Heart right ventricle (tissue), 16 donors: ENCODE measurements at regions of chr3 and their contacts with region 1.

Region 1: DNA sequence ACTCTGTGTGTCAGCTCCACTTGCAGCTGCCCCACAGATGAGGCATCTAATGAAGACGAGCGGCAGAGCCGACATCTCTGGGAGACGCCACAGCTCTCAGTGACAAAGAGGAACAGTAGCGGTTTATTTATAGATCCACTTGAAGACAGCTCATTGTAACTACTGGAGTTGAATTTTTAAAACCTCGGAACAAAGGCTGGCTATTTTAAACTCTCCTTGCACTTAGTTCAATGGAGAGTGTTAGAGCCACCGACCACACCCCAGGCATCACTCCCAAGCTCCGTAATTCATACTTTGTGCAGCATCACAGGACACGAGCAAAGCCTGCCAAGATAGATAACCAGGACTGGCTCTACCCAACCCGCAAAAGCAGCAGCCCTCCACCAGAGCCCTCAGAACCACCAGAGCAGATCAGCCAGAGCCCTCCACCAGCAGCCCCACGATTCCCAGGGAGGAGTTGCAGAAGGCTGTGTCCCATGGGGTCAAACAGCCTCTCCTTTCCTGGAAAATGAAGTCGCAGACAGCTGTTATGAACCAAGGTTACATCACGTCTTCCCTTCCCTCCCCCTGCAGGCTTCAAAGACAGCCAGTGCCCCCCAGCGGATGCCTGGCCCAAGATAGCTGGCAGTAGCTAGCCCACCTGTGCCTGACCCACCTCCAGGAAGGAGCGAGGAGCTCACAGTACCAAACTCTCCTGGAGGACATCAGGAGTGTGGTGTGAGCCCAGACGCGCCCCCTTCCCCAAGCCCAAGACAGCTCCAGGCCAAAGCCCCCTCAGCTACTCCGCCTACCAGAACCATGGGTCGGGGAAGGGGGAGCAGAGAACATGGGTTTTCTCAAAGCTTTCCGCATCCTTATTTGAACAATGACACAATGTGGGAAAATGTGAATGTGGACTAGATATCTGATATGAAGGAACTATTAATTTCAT is 45.7 kb downstream of the POC1A start:
- DNase-seq: peak; percentile 51 to 79
- ATAC-seq: peak; percentile 71 to 92 (median 83)
- H3K4me3 ChIP-seq: peak overlapping the region in 5 of 10 donors; percentile 18 to 38 (median 29)
- H3K27ac ChIP-seq: peak overlapping the region; percentile 21 to 85 (median 70)
- H3K4me1 ChIP-seq: peaks cover 0 to 46% (median 39%) of the 10 kb centered on the region in 9 donors
- H3K27me3 ChIP-seq: no peaks in the 10 kb centered on the region
- CTCF ChIP-seq: peak in 8 of 9 donors; percentile 27 to 74 (median 56)

Region 2: GRCh38 chr3:52068055-52068571 is 40.5 kb before region 1 on chr3:
- intact Hi-C with region 1: loop called in 2 of 10 experiments (anchors 5 kb)
- DNase-seq: no peak
- ATAC-seq: no peak
- H3K4me3 ChIP-seq: no peak overlapping the region
- H3K27ac ChIP-seq: peak overlapping the region in 4 of 10 donors; percentile 19 to 41 (median 32)
- H3K4me1 ChIP-seq: peaks cover 15 to 49% (median 29%) of the 10 kb centered on the region in 9 donors
- H3K27me3 ChIP-seq: no peaks in the 10 kb centered on the region
- CTCF ChIP-seq: no peak

Region 3: DNA sequence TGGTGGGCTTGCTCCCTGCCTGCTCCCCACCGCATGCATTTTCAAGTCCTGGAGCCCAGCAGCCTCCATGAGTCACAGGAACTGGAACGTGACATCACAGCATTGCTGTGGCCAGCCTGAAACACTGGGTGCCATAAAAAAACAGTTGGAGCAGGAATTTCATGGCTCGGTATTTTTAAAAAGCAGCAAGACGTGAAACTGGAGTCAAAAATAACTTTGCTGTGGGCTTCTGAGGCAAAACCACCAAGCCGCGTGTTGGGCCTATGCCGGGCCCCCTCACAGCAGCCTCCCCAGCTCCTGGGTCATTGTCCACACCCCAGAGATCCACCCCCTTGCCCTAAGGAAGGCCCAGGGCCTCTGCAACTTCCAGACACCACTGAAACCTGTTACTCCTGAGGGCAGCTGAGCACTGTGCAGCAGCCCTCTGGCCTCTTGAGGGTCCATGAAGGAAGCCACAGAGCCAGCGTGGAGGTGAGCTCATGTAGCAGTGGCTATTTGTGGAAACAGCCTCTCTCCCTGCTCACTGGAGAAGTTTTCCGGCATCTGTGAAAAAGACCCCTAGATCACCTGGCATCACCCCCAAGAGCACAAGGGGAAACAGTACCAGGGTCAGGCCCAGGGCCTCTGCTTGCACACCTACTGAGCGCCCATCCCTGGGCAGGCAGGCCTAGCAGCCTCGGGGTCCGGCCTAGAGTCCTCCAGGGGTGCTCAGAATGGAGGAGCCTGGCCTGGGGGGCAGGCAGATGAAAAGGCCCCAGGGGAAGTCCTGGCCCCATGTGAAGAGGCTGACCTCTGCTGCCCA is 18.2 kb before region 1 on chr3:
- intact Hi-C with region 1: loop called in 1 of 10 experiments (anchors 1 kb)
- DNase-seq: peak in 1 of 2 donors; percentile 33
- ATAC-seq: peak in 6 of 8 donors; percentile 35 to 67 (median 48)
- H3K4me3 ChIP-seq: no peak overlapping the region
- H3K27ac ChIP-seq: peak overlapping the region; percentile 3 to 77 (median 62)
- H3K4me1 ChIP-seq: peaks cover 15 to 71% (median 57%) of the 10 kb centered on the region in 9 donors
- H3K27me3 ChIP-seq: no peaks in the 10 kb centered on the region
- CTCF ChIP-seq: no peak